CD8-positive, alpha-beta memory T cell (primary cell): ENCODE measurements at regions of chr11 and their contacts with region 1.

Region 1: GRCh38 chr11:66311965-66312548 is 4.8 kb downstream of the CD248 start:
- DNase-seq: peak; percentile 96 to 100 (median 99)
- H3K4me3 ChIP-seq: peak overlapping the region; percentile 66
- H3K4me3 Mint-ChIP-seq: peak overlapping the region; percentile 87 to 94 (median 93)
- H3K27ac ChIP-seq: peak overlapping the region; percentile 66
- H3K27ac Mint-ChIP-seq: peak overlapping the region; percentile 91 to 99 (median 98)
- H3K4me1 ChIP-seq: peaks cover 33% of the 10 kb centered on the region
- H3K4me1 Mint-ChIP-seq: peaks cover 19 to 34% (median 30%) of the 10 kb centered on the region in 3 donors
- H3K27me3 ChIP-seq: no peaks in the 10 kb centered on the region
- H3K27me3 Mint-ChIP-seq: peaks cover 0 to 3% of the 10 kb centered on the region in 2 donors

Region 2: GRCh38 chr11:66288671-66289547 is 23.1 kb before region 1 on chr11 and contains the start of gene YIF1A:
- CTCF ChIA-PET with region 1: interaction called, 39 read pairs
- POLR2A ChIA-PET with region 1: interaction called, 19 read pairs
- DNase-seq: peak; percentile 98 to 99 (median 98)
- H3K4me3 ChIP-seq: peak within 1 kb of the TSS; percentile 73
- H3K4me3 Mint-ChIP-seq: peak within 1 kb of the TSS; percentile 84 to 96 (median 87)
- H3K27ac ChIP-seq: peak within 1 kb of the TSS; percentile 93
- H3K27ac Mint-ChIP-seq: peak within 1 kb of the TSS; percentile 82 to 97 (median 91)
- H3K4me1 ChIP-seq: peaks cover 28% of the 10 kb centered on the region
- H3K4me1 Mint-ChIP-seq: peaks cover 27 to 47% (median 35%) of the 10 kb centered on the region in 3 donors
- H3K27me3 ChIP-seq: peaks cover 15% of the 10 kb centered on the region
- H3K27me3 Mint-ChIP-seq: peaks cover 11 to 20% of the 10 kb centered on the region in 2 donors
- total RNA-seq, gene YIF1A: 96.5 to 97.3 TPM

Region 3: GRCh38 chr11:66328307-66329144 is 16.5 kb after region 1 on chr11:
- CTCF ChIA-PET with region 1: interaction called, 47 read pairs
- POLR2A ChIA-PET with region 1: interaction called, 10 read pairs
- DNase-seq: peak; percentile 70 to 85 (median 79)
- H3K4me3 ChIP-seq: peak overlapping the region; percentile 38
- H3K4me3 Mint-ChIP-seq: peak overlapping the region; percentile 15 to 70 (median 57)
- H3K27ac ChIP-seq: peak overlapping the region; percentile 22
- H3K27ac Mint-ChIP-seq: peak overlapping the region; percentile 79 to 94 (median 92)
- H3K4me1 ChIP-seq: peaks cover 40% of the 10 kb centered on the region
- H3K4me1 Mint-ChIP-seq: peaks cover 35 to 51% (median 37%) of the 10 kb centered on the region in 3 donors
- H3K27me3 ChIP-seq: no peaks in the 10 kb centered on the region
- H3K27me3 Mint-ChIP-seq: peaks cover 0 to 3% of the 10 kb centered on the region in 2 donors

Region 4: GRCh38 chr11:66344550-66345315 is 32.7 kb after region 1 on chr11 and contains the start of gene BRMS1:
- CTCF ChIA-PET with region 1: interaction called, 72 read pairs
- POLR2A ChIA-PET with region 1: interaction called, 13 read pairs
- DNase-seq: peak; percentile 92 to 98 (median 94)
- H3K4me3 ChIP-seq: peak within 1 kb of the TSS; percentile 96
- H3K4me3 Mint-ChIP-seq: peak within 1 kb of the TSS; percentile 96 to 100 (median 97)
- H3K27ac ChIP-seq: peak within 1 kb of the TSS; percentile 92
- H3K27ac Mint-ChIP-seq: peak within 1 kb of the TSS; percentile 96 to 99 (median 98)
- H3K4me1 ChIP-seq: peaks cover 45% of the 10 kb centered on the region
- H3K4me1 Mint-ChIP-seq: peaks cover 43 to 65% (median 50%) of the 10 kb centered on the region in 3 donors
- H3K27me3 ChIP-seq: no peaks in the 10 kb centered on the region
- H3K27me3 Mint-ChIP-seq: peaks cover 0 to 10% of the 10 kb centered on the region in 2 donors
- total RNA-seq, gene BRMS1: 66.1 to 66.5 TPM

Region 5: GRCh38 chr11:66386171-66387069 is 74.4 kb after region 1 on chr11:
- CTCF ChIA-PET with region 1: interaction called, 65 read pairs
- POLR2A ChIA-PET with region 1: interaction called, 5 read pairs
- DNase-seq: peak; percentile 64 to 85 (median 70)
- H3K4me3 ChIP-seq: peak overlapping the region; percentile 31
- H3K4me3 Mint-ChIP-seq: peak overlapping the region in 4 of 7 donors; percentile 0 to 33 (median 21)
- H3K27ac ChIP-seq: no peak overlapping the region
- H3K27ac Mint-ChIP-seq: peak overlapping the region in 3 of 8 donors; percentile 14 to 77 (median 56)
- H3K4me1 ChIP-seq: peaks cover 7% of the 10 kb centered on the region
- H3K4me1 Mint-ChIP-seq: peaks cover 7 to 8% (median 7%) of the 10 kb centered on the region in 3 donors
- H3K27me3 ChIP-seq: no peaks in the 10 kb centered on the region
- H3K27me3 Mint-ChIP-seq: peaks cover 0 to 4% of the 10 kb centered on the region in 2 donors

Region 6: DNA sequence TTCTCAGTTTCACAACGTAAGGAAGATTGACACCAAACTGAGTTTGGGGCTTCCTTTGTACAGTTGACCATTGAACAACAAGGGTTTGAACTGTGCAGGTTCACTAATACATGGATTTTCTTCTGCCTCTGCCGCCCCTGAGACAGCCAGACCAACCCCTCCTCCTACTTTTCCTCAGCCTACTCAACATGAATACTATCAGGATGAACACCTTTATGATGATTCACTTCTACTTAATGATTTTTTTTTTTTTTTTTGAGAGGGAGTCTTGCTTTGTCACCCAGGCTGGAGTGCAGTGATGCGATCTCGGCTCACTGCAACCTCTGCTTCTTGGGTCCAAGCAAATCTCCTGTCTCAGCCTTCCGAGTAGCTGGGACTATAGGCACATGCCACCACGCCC is 341.1 kb after region 1 on chr11:
- CTCF ChIA-PET with region 1: no interaction called
- POLR2A ChIA-PET with region 1: no interaction called
- DNase-seq: no peak
- H3K4me3 ChIP-seq: no peak overlapping the region
- H3K4me3 Mint-ChIP-seq: peak overlapping the region in 1 of 7 donors; percentile 77
- H3K27ac ChIP-seq: no peak overlapping the region
- H3K27ac Mint-ChIP-seq: peak overlapping the region in 2 of 8 donors; percentile 42 to 46
- H3K4me1 ChIP-seq: peaks cover 9% of the 10 kb centered on the region
- H3K4me1 Mint-ChIP-seq: peaks cover 29 to 48% (median 36%) of the 10 kb centered on the region in 3 donors
- H3K27me3 ChIP-seq: no peaks in the 10 kb centered on the region
- H3K27me3 Mint-ChIP-seq: no peaks in the 10 kb centered on the region